Activated CD8-positive, alpha-beta T cell treated with anti-CD3 and anti-CD28 coated beads for 36 hours (primary cell): ENCODE measurements at regions of chr12 and their contacts with region 1.

Region 1: DNA sequence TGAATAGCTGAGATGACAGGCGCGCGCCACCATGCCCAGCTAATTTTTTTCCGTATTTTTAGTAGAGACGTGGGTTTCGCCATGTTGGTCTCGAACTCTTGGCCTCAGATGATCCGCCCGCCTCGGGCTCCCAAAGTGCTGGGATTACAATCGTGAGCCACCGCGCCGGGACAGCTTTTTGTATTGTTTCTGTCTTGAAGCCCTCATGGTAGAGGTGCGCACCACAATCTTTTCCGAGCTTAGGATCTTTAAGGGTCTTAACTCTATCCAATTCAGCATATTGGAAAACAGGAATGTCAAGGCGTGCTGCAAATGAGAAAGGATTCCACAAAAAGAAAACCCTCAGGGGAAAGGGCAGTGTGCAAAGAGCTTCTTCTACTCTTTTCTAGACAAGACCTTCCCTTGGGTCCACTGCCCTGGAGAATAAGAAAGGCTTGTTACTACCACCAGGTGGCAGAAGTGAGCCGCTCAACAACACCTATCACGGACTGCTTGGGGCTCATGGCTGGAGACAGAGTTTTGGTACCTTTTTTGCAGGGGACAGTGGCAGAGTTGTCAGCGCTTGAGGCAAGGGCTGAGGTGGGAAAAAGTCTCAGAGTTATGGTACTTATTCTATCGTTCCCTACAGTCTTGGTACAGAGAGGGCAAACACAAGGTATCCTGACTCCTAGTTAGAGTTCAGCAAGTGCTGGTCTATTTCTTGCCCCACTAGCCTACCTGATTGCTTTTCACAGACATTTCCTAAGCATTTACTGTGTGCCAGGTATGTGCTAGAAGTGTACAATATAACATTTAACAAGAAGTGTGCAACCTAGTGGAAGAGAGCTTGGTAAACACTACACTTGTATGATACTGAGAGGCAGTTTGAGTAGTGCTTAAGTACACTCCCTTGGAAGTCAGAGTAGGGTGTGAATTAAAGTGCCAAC is 16.4 kb upstream of the SP7 start:
- DNase-seq: peak; percentile 93
- ATAC-seq: peak; percentile 99
- H3K4me3 Mint-ChIP-seq: no peak overlapping the region
- H3K27ac Mint-ChIP-seq: no peak overlapping the region
- H3K4me1 Mint-ChIP-seq: peaks cover 10% of the 10 kb centered on the region
- H3K27me3 Mint-ChIP-seq: no peaks in the 10 kb centered on the region
- CTCF ChIP-seq: peak; percentile 83

Region 2: GRCh38 chr12:53056296-53056695 is 296.3 kb before region 1 on chr12:
- CTCF ChIA-PET with region 1: no interaction called
- POLR2A ChIA-PET with region 1: no interaction called
- intact Hi-C with region 1: no loop called
- DNase-seq: no peak
- ATAC-seq: no peak
- H3K4me3 Mint-ChIP-seq: no peak overlapping the region
- H3K27ac Mint-ChIP-seq: no peak overlapping the region
- H3K4me1 Mint-ChIP-seq: peaks cover 6% of the 10 kb centered on the region
- H3K27me3 Mint-ChIP-seq: no peaks in the 10 kb centered on the region
- CTCF ChIP-seq: no peak

Region 3: DNA sequence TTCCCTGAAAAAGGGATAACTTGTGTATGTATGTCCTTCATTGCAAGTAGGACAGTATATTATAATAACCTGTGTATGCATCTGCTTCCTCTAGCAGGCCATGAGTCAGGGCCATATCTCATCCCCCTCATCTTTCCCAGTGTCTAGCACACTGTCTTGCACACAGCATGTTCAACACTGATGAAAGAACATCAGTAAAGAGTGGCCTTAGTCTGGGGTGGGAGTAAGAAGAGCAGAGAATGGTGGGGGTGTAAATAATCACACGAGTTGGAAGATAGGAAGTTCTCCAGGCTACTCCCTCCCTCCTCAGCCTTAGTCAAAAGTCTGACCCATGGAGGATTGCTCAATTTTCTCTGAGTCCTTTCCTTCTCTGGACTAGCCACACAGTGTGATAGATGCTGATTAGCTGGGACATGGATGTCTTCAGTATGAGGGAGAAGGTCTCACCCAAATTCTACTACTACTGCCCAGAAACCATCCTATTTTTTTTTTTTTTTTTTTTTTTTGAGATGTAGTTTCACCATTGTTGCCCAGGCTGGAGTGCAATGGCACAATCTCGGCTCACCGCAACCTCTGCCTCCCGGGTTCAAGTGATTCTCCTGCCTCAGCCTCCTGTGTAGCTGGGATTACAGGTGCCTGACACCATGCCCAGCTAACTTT is 12.8 kb after region 1 on chr12:
- CTCF ChIA-PET with region 1: interaction called, 19 read pairs
- POLR2A ChIA-PET with region 1: interaction called, 3 read pairs
- intact Hi-C with region 1: no loop called
- DNase-seq: no peak
- ATAC-seq: peak; percentile 61
- H3K4me3 Mint-ChIP-seq: no peak overlapping the region
- H3K27ac Mint-ChIP-seq: peak overlapping the region; percentile 83
- H3K4me1 Mint-ChIP-seq: peaks cover 13% of the 10 kb centered on the region
- H3K27me3 Mint-ChIP-seq: no peaks in the 10 kb centered on the region
- CTCF ChIP-seq: no peak

Region 4: GRCh38 chr12:53391729-53392128 is 39.1 kb after region 1 on chr12:
- CTCF ChIA-PET with region 1: interaction called, 24 read pairs
- POLR2A ChIA-PET with region 1: no interaction called
- intact Hi-C with region 1: no loop called
- DNase-seq: no peak
- ATAC-seq: no peak
- H3K4me3 Mint-ChIP-seq: no peak overlapping the region
- H3K27ac Mint-ChIP-seq: peak overlapping the region; percentile 39
- H3K4me1 Mint-ChIP-seq: peaks cover 42% of the 10 kb centered on the region
- H3K27me3 Mint-ChIP-seq: no peaks in the 10 kb centered on the region
- CTCF ChIP-seq: no peak

Region 5: GRCh38 chr12:53427905-53428594 is 75.5 kb after region 1 on chr12:
- CTCF ChIA-PET with region 1: interaction called, 187 read pairs
- POLR2A ChIA-PET with region 1: interaction called, 5 read pairs
- intact Hi-C with region 1: no loop called
- DNase-seq: peak; percentile 62
- ATAC-seq: peak; percentile 99
- H3K4me3 Mint-ChIP-seq: no peak overlapping the region
- H3K27ac Mint-ChIP-seq: no peak overlapping the region
- H3K4me1 Mint-ChIP-seq: peaks cover 9% of the 10 kb centered on the region
- H3K27me3 Mint-ChIP-seq: no peaks in the 10 kb centered on the region
- CTCF ChIP-seq: no peak

Region 6: GRCh38 chr12:53500776-53501614 is 148.4 kb after region 1 on chr12 and contains the start of gene TARBP2:
- CTCF ChIA-PET with region 1: interaction called, 6 read pairs
- POLR2A ChIA-PET with region 1: interaction called, 3 read pairs
- intact Hi-C with region 1: loop called (anchors 10 kb)
- DNase-seq: peak; percentile 98
- ATAC-seq: peak; percentile 81
- H3K4me3 Mint-ChIP-seq: peak within 1 kb of the TSS; percentile 76
- H3K27ac Mint-ChIP-seq: peak within 1 kb of the TSS; percentile 94
- H3K4me1 Mint-ChIP-seq: peaks cover 39% of the 10 kb centered on the region
- H3K27me3 Mint-ChIP-seq: no peaks in the 10 kb centered on the region
- CTCF ChIP-seq: no peak
- total RNA-seq, gene TARBP2: 32.0 to 33.3 TPM